Caco-2 (cell line): ENCODE measurements at regions of chr6 and their contacts with region 1.

Region 1: GRCh38 chr6:154113392-154113791 is 74.4 kb downstream of the OPRM1 start:
- DNase-seq: no peak
- H3K4me3 ChIP-seq: no peak overlapping the region
- H3K4me3 Mint-ChIP-seq: no peak overlapping the region
- H3K27ac Mint-ChIP-seq: no peak overlapping the region
- H3K4me1 ChIP-seq: no peaks in the 10 kb centered on the region
- H3K4me1 Mint-ChIP-seq: no peaks in the 10 kb centered on the region
- H3K27me3 ChIP-seq: no peaks in the 10 kb centered on the region
- H3K27me3 Mint-ChIP-seq: peaks cover 4% of the 10 kb centered on the region
- CTCF ChIP-seq: no peak

Region 2: GRCh38 chr6:154070657-154071056 is 42.7 kb before region 1 on chr6:
- CTCF ChIA-PET with region 1: no interaction called
- POLR2A ChIA-PET with region 1: no interaction called
- intact Hi-C with region 1: no loop called
- DNase-seq: no peak
- H3K4me3 ChIP-seq: no peak overlapping the region
- H3K4me3 Mint-ChIP-seq: no peak overlapping the region
- H3K27ac Mint-ChIP-seq: no peak overlapping the region
- H3K4me1 ChIP-seq: no peaks in the 10 kb centered on the region
- H3K4me1 Mint-ChIP-seq: no peaks in the 10 kb centered on the region
- H3K27me3 ChIP-seq: no peaks in the 10 kb centered on the region
- H3K27me3 Mint-ChIP-seq: peaks cover 4% of the 10 kb centered on the region
- CTCF ChIP-seq: no peak

Region 3: DNA sequence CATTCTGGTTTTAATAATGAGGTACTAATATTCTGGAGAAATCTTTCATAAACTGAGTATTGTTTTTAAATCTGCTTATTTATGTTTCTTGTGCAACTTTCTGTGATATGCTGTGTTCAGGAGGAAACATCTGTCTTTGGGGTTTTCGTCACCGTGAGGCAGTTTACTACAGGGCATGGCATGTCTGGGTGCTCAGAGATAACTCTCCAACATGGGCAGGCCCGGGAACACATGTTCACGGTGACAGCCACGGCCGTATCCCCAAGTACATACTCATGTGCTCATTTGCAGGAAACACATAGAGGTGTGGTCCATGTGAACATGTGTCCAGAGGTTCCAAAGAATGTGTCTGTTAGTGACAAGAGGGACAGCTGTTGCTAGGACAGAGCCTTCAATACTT is 459.2 kb after region 1 on chr6:
- CTCF ChIA-PET with region 1: no interaction called
- POLR2A ChIA-PET with region 1: interaction called, 11 read pairs
- intact Hi-C with region 1: no loop called
- DNase-seq: no peak
- H3K4me3 ChIP-seq: no peak overlapping the region
- H3K4me3 Mint-ChIP-seq: no peak overlapping the region
- H3K27ac Mint-ChIP-seq: no peak overlapping the region
- H3K4me1 ChIP-seq: no peaks in the 10 kb centered on the region
- H3K4me1 Mint-ChIP-seq: peaks cover 6% of the 10 kb centered on the region
- H3K27me3 ChIP-seq: no peaks in the 10 kb centered on the region
- H3K27me3 Mint-ChIP-seq: no peaks in the 10 kb centered on the region
- CTCF ChIP-seq: no peak